Caco-2 (cell line): ENCODE measurements at regions of chr15 and their contacts with region 1.

Region 1: DNA sequence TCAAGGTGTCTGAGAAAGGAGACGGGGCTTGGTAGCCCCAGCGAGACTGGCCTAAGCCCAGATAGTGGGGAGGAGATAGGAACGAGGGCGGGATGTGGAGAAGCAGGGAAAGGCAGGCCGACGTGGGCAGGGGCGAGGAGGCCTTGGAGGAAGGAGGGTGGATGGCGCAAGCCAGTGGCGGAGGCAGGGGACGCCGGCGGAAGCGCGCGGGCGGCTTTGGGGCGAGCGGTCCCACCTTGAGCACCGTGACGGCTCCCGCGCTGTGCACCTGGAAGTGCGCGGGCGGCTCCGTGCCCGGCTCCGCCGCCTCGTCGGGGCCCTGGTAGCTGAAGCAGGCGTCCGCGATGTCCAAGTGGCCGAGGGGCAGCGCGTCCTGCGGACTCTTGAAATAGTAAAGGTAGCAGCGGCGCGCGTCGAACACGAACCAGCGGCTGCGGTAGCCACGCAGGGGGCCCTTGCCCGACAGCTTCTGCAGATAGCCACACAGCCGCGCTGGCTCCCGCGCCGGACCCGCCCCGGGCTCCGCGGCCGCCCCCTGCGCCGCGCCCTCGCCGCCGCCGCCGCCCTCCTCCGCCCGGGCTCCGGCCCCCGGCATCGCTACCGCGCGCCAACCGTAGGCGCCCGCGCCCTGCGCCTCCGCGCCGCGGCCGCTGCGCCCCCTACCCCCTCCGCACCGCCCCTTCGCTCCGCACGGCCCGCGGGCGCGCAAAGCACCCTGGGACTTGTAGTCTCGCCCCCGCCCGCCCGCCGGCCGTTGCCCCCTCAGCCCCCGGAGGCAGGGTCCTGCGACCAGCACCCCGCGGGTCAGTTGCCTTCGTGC is at the start of gene TBC1D2B:
- DNase-seq: peak; percentile 57 to 72
- H3K4me3 ChIP-seq: peak within 1 kb of the TSS; percentile 82
- H3K4me3 Mint-ChIP-seq: peak within 1 kb of the TSS; percentile 89
- H3K27ac Mint-ChIP-seq: peak within 1 kb of the TSS; percentile 85
- H3K4me1 ChIP-seq: peaks cover 9% of the 10 kb centered on the region; the same call in 1 of the 2 replicates
- H3K4me1 Mint-ChIP-seq: peaks cover 8% of the 10 kb centered on the region
- H3K27me3 ChIP-seq: no peaks in the 10 kb centered on the region
- H3K27me3 Mint-ChIP-seq: no peaks in the 10 kb centered on the region
- CTCF ChIP-seq: no peak
- total RNA-seq, gene TBC1D2B: 18.3 and 19.1 TPM in 2 replicates

Region 2: DNA sequence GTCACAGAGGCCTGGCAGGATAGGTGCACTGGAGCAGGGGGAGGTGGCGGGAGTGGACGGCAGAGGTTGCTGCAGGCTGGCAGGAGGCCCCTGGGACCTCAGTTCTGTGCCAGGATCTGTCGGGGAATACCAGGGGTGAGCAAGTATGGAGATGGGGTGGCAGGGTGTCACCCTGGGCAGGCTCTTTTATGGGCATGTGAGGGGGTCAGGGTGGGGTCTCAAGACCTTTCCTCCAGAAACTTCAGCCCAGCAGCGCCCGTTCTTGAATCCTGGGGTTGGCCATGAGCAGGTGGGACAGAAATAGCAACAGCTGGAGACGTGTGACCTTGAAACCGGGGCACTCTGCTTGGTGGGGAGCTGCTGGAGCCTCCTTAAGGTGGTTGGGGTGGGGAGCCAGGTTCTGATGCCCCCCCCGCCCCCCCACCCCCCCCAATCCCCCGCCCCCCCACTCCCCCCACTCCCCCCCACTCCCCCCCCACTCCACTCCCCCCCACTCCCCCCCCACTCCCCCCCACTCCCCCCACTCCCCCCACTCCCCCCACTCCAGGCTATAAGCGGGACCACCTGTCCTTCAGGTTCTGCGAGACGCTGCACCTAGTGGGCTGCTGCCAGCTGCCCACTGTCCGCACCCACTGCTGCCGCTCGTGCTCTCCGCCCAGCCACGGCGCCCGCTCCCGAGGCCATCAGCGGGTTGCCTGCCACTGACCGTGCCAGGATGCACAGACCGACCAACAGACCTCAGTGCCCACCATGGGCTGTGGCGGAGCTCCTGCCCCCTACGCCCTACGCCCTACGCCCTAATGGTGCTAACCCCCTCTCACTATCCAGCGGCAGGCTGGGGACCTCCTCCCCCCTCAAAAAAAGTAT is 84.7 kb before region 1 on chr15:
- CTCF ChIA-PET with region 1: no interaction called
- POLR2A ChIA-PET with region 1: no interaction called
- intact Hi-C with region 1: no loop called
- DNase-seq: no peak
- H3K4me3 ChIP-seq: no peak overlapping the region
- H3K4me3 Mint-ChIP-seq: no peak overlapping the region
- H3K27ac Mint-ChIP-seq: no peak overlapping the region
- H3K4me1 ChIP-seq: no peaks in the 10 kb centered on the region
- H3K4me1 Mint-ChIP-seq: peaks cover 5% of the 10 kb centered on the region
- H3K27me3 ChIP-seq: no peaks in the 10 kb centered on the region
- H3K27me3 Mint-ChIP-seq: no peaks in the 10 kb centered on the region
- CTCF ChIP-seq: no peak

Region 3: DNA sequence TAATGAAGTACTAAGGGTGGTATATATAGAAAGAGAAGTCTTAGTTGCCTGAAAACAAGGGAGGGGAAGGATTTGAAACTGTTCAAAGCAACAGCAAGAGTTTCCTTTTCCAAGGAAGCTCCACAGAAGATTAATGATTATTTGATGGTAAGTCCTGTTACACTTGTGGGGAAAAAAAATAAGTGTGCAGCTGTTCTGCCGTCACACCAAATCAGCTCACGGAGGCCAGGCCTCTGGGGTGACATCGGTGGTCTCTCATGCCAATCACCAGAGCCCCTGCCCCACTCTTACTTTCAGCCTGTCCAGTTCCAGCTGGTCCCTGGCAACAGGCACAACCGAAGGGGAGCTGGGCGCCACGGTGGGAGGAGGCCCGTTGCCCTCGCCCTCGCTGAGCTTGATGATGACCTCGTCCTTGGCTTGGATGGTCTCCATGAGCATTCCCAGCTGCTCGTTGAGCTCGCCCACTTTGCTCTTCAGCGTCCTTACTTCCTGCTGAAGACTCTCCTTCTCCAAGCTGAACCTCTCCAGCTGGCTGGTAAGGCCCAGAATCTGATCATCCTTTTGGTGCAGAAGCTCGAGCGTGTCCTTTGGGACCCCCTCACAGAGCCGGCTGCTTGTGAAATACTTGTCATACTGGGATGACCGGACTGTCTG is 53.3 kb before region 1 on chr15:
- CTCF ChIA-PET with region 1: no interaction called
- POLR2A ChIA-PET with region 1: no interaction called
- intact Hi-C with region 1: loop called (anchors 1 kb)
- DNase-seq: no peak
- H3K4me3 ChIP-seq: no peak overlapping the region
- H3K4me3 Mint-ChIP-seq: no peak overlapping the region
- H3K27ac Mint-ChIP-seq: no peak overlapping the region
- H3K4me1 ChIP-seq: no peaks in the 10 kb centered on the region
- H3K4me1 Mint-ChIP-seq: no peaks in the 10 kb centered on the region
- H3K27me3 ChIP-seq: no peaks in the 10 kb centered on the region
- H3K27me3 Mint-ChIP-seq: no peaks in the 10 kb centered on the region
- CTCF ChIP-seq: no peak

Region 4: DNA sequence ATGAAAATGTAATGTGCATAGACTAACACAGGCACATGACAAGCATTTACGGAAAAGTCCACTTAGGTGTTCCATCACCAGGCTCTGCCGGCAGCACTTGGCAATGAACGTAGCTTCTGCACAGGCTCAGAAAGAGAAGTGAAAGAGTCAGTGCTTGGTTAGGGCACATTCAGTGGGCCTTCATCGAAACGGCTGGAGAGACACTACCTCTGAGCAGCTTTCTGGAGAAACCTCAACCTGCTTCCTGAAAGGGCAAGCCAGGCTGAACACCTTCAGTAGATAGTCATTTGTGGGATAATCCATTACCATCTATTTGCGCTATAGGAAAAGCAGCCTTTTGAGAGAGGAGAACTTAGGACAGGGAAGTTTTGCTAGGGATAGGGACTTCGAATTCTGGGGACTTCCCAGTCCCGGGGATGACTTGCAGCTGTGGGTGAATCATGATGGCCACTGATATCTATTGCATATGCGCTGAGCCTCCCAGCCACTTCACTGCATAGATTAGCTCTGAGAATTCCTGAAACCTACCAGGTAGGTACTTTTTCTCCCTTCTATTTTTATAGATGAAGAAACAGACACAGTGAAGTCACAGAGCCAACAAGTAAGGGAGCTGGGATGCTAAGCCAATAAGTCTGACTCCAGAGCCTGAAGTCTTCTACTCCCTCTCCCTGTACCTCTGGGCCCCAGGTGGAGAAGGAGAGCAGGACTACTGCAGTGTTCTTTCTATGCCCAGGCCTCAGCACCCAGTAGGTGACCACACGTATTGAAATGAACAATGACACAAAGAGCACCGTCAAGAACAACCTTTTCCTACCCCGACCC is 10.9 kb after region 1 on chr15:
- CTCF ChIA-PET with region 1: interaction called, 3 read pairs
- POLR2A ChIA-PET with region 1: no interaction called
- intact Hi-C with region 1: loop called (anchors 1 kb)
- DNase-seq: no peak
- H3K4me3 ChIP-seq: no peak overlapping the region
- H3K4me3 Mint-ChIP-seq: peak overlapping the region; percentile 5
- H3K27ac Mint-ChIP-seq: peak overlapping the region; percentile 7
- H3K4me1 ChIP-seq: peaks cover 23% of the 10 kb centered on the region
- H3K4me1 Mint-ChIP-seq: no peaks in the 10 kb centered on the region
- H3K27me3 ChIP-seq: no peaks in the 10 kb centered on the region
- H3K27me3 Mint-ChIP-seq: no peaks in the 10 kb centered on the region
- CTCF ChIP-seq: no peak

Region 5: DNA sequence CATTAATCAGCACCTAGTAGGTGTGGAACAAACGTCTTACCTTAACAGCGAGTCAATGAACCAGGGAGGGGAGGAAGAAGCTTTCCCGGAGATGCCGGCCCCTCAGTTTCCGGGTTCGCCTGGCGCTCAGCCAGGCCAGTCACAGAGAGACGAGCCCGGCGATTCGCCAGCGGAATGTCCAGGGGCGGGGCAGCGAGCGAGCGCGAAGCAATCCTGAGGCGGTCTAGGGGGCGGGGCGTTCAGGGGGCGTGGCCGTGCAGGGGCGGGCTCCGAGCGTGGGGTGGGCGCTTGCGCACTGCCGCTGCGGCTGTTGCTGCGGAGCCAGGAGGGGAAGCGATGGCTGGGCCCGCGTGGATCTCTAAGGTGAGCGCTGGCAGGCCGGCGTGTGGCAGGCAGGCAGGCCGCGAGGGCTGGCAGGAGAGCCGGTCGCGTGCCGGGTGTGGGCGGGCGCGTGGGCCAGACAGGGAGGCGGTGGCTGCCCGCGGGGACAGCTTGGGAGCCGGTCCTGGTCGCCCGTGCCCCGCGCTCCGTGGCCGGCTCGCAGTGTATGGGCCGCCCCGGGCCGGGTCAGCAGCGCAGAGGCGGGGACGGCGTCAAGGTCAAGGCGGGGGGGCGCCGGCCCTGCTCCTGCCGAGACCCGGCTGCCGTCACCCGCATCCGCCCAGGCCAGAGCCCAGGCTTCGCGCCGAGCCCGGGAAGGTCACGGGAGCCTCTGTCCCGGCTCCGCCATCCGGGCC is 72.0 kb after region 1 on chr15 and contains the start of gene IDH3A:
- CTCF ChIA-PET with region 1: no interaction called
- POLR2A ChIA-PET with region 1: no interaction called
- intact Hi-C with region 1: no loop called
- DNase-seq: peak; percentile 96 to 98
- H3K4me3 ChIP-seq: peak within 1 kb of the TSS; percentile 73
- H3K4me3 Mint-ChIP-seq: peak within 1 kb of the TSS; percentile 93
- H3K27ac Mint-ChIP-seq: peak within 1 kb of the TSS; percentile 82
- H3K4me1 ChIP-seq: 0 out of 2 replicates have a peak, but pooled peaks cover 3% of the 10 kb centered on the region
- H3K4me1 Mint-ChIP-seq: no peaks in the 10 kb centered on the region
- H3K27me3 ChIP-seq: no peaks in the 10 kb centered on the region
- H3K27me3 Mint-ChIP-seq: no peaks in the 10 kb centered on the region
- CTCF ChIP-seq: no peak
- total RNA-seq, gene IDH3A: 67.3 and 71.1 TPM in 2 replicates